ENCODE measurements at regions of chr3 and their contacts with region 1.

Region 1: DNA sequence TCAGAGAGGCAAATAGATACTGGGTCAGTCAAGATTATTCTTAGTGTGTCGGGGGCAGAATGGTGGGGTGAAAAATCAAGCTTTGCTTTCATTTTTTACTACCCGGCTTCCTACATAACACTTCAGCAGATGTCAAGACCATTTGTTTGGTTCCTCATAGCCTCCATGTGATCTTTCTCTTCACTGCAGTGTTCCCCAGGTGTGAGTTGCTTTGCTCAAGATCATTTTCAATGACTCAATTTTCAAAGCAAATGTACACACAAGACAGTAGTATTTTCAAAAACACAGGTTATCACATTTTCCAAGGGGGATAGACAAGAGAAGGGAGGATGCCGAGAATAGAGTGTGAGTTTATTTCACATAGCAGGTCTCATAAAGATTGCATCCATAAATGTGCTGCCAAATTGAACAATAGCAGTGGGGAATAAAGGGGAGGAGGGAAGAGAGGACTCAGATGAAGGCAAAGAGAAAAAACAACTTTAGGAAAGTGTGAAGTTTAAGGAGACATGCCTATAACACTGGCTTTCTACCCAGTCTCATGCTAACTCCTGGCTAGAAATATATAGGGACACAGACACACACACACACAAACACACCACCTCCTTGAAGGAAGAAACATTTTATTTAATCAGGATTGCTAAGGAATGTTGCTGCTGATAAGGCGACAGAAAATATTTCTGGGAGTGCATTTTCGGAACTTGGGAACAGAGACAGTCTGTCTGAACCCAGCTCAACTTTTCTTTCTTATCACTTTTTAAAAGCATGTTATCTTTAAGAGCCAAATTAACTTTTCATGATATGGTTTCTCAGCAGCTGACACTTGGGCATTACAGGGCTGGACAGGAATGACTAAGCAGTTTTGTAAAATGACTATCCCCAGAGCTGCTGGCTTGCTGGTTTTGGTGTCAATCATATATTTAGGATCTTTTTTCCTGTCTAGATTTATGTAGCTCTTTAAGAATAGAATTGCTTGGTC is 402.4 kb downstream of the RBMS3 start:
- DNase-seq: no peak

Region 2: GRCh38 chr3:29531644-29532043 is 151.7 kb before region 1 on chr3:
- intact Hi-C with region 1: loop called (anchors 5 kb)
- DNase-seq: no peak

Region 3: DNA sequence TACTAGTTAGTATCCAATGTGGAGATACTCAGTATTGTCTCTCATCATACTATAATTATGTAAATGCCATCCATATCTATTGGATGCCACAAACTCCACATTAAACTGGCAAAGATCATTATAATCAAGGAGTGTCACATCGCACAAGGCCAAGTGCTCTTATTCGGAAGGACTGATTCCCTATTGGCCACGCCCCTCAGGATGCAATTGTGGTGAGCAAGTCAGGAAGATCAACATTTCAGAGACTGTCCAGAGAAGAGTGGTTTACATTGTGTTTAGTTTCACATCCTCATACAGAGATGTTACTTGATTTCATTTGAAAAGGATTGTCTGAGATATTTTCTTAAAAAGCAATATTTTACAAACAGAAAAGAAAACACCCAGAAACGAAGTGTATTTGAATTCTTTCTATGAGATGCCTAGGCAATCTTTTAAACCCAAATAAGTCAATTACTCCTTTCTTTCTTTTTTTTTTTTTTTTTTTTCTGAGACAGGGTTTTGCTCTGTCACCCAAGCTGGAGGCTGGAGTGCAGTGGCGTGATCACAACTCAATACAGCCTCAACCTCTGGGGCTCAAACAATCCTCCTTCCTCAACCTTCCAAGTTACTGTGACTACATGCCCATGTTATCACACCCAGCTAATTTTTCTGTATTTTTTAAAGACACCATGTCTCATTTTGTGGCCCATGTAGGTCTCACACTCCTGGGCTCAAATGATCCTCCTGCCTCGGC is 33.3 kb before region 1 on chr3:
- intact Hi-C with region 1: loop called (anchors 5 kb)
- DNase-seq: no peak